ENCODE measurements at regions of chr15 and their contacts with region 1.

Region 1: GRCh38 chr15:73081321-73081958 is 29.2 kb downstream of the NEO1 start:
- DNase-seq: peak in 5 of 14 experiments; percentile 0 to 71 (median 49)
- ATAC-seq: peak; percentile 54
- H3K4me3 ChIP-seq: no peak overlapping the region
- H3K4me3 Mint-ChIP-seq: no peak overlapping the region
- H3K27ac ChIP-seq: no peak overlapping the region
- H3K27ac Mint-ChIP-seq: no peak overlapping the region
- H3K4me1 ChIP-seq: no peaks in the 10 kb centered on the region
- H3K4me1 Mint-ChIP-seq: no peaks in the 10 kb centered on the region
- H3K27me3 ChIP-seq: no peaks in the 10 kb centered on the region
- H3K27me3 Mint-ChIP-seq: peaks cover 4% of the 10 kb centered on the region
- CTCF ChIP-seq: peak; percentile 68

Region 2: GRCh38 chr15:72339777-72340177 is 741.7 kb before region 1 on chr15:
- CTCF ChIA-PET with region 1: no interaction called
- POLR2A ChIA-PET with region 1: no interaction called
- intact Hi-C with region 1: loop called in 1 of 2 experiments (anchors 10 kb)
- DNase-seq: peak in 1 of 14 experiments; percentile 22
- ATAC-seq: no peak
- H3K4me3 ChIP-seq: no peak overlapping the region
- H3K4me3 Mint-ChIP-seq: no peak overlapping the region
- H3K27ac ChIP-seq: no peak overlapping the region
- H3K27ac Mint-ChIP-seq: no peak overlapping the region
- H3K4me1 ChIP-seq: no peaks in the 10 kb centered on the region
- H3K4me1 Mint-ChIP-seq: no peaks in the 10 kb centered on the region
- H3K27me3 ChIP-seq: no peaks in the 10 kb centered on the region
- H3K27me3 Mint-ChIP-seq: no peaks in the 10 kb centered on the region
- CTCF ChIP-seq: no peak

Region 3: DNA sequence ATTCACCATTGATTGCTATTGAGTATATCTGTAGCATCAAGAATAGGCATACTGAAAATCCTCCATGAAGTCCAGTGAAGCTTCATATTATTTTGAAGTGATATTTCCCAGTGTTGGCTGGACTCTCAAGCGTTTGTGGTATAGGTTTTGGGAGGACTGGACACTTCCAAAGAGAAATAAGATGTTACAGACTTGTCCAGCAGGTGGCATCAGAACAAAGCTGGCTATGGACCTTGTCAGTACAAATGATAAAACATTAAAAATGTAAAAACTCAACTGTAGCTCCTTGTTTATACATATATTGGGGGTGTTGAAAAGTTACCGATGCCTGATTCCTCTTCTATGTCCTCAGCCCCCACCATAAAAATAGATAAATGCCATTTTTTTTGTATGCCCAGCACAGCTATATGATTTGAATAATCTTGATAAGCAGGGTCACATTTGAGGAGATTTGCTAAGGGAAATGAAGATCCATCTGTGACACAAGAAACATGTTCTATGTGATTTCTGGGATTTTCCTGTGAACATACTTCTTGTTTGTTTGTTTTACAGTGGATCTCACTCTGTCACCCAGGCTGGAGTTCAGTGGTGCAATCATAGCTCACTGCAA is 481.5 kb before region 1 on chr15:
- CTCF ChIA-PET with region 1: no interaction called
- POLR2A ChIA-PET with region 1: no interaction called
- intact Hi-C with region 1: loop called in 1 of 2 experiments (anchors 5 kb)
- DNase-seq: peak in 4 of 14 experiments; percentile 35 to 58 (median 48)
- ATAC-seq: no peak
- H3K4me3 ChIP-seq: no peak overlapping the region
- H3K4me3 Mint-ChIP-seq: no peak overlapping the region
- H3K27ac ChIP-seq: no peak overlapping the region
- H3K27ac Mint-ChIP-seq: no peak overlapping the region
- H3K4me1 ChIP-seq: no peaks in the 10 kb centered on the region
- H3K4me1 Mint-ChIP-seq: no peaks in the 10 kb centered on the region
- H3K27me3 ChIP-seq: no peaks in the 10 kb centered on the region
- H3K27me3 Mint-ChIP-seq: no peaks in the 10 kb centered on the region
- CTCF ChIP-seq: peak; percentile 79

Region 4: DNA sequence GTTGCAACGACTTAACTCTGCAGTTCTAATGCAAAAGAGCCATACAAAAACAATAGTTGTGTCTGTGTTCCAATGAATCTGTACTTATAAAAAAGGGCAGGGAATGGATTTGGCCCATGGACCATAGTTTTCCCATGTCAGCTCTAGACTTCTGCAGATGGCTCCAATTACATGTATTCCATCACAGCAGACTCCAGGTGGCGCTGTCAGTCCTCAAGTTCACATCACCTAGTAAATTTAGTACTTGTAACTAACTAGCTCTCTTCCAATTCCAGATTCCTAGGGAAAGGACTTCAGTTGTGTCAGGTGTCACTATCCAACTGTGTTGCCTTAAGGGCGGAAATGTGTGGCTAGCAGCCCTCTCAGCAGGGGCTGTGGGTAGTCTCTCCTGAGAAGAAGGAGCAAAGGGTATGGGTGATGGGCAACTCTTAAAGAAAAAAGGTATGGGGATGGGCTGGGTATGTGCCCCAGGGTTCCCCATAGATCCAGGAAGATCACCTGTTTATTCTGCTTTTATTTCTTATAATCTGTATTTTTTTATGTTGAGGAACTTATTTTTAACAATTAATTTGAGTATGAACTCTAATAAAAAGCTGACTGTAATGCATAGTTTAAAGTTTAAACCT is 359.3 kb before region 1 on chr15:
- CTCF ChIA-PET with region 1: interaction called, 14 read pairs
- POLR2A ChIA-PET with region 1: interaction called, 3 read pairs
- intact Hi-C with region 1: loop called in 1 of 2 experiments (anchors 2 kb)
- DNase-seq: peak; percentile 51 to 81 (median 65)
- ATAC-seq: peak; percentile 51
- H3K4me3 ChIP-seq: no peak overlapping the region
- H3K4me3 Mint-ChIP-seq: no peak overlapping the region
- H3K27ac ChIP-seq: no peak overlapping the region
- H3K27ac Mint-ChIP-seq: no peak overlapping the region
- H3K4me1 ChIP-seq: no peaks in the 10 kb centered on the region
- H3K4me1 Mint-ChIP-seq: no peaks in the 10 kb centered on the region
- H3K27me3 ChIP-seq: no peaks in the 10 kb centered on the region
- H3K27me3 Mint-ChIP-seq: no peaks in the 10 kb centered on the region
- CTCF ChIP-seq: peak; percentile 92

Region 5: DNA sequence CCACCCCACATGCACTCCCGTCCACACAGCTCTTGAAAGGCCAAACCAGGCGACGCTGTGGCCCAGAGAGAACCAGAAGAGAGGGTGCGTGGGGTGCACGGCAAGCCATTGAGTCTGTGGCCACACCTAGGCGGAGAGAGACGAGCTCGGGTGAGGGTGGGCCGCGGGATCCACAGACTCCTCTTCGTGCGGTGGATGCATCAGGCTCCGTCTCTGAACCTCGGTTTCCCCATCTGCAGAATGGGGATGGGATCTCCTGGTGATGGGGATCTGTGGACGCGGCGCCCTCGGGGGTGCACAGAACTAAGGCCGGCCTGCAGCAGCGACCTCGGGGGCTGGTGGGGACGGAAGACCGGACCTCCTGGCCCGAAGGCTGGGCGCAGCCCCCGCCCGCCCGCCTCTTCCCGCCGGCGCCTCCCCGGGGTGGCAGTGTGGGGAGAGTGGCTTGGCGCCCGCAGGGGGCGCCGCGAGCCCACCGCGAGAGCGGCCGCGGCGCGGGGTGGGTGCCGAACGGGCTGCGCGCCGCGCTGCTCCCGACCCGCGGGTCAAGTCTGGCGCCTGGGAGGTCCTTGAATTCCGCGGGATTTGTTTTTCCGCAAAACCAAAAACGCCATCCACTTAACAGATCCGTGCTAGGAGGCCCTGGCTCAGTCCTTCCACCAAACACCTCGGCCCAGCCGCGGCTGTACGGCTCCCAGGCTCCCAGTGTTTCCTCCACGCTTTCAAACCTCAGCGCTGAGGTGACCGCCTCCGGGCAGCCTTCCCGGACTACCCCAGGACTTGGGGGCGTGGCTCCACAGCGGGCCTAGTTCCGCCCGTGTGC is 284.7 kb before region 1 on chr15:
- CTCF ChIA-PET with region 1: no interaction called
- POLR2A ChIA-PET with region 1: no interaction called
- intact Hi-C with region 1: loop called (anchors 1 to 2 kb)
- DNase-seq: peak in 12 of 14 experiments; percentile 17 to 74 (median 38)
- ATAC-seq: peak; percentile 81
- H3K4me3 ChIP-seq: peak overlapping the region; percentile 66
- H3K4me3 Mint-ChIP-seq: peak overlapping the region; percentile 89
- H3K27ac ChIP-seq: no peak overlapping the region
- H3K27ac Mint-ChIP-seq: no peak overlapping the region
- H3K4me1 ChIP-seq: peaks cover 11% of the 10 kb centered on the region
- H3K4me1 Mint-ChIP-seq: peaks cover 10% of the 10 kb centered on the region
- H3K27me3 ChIP-seq: peaks cover 6 to 8% of the 10 kb centered on the region in 2 experiments
- H3K27me3 Mint-ChIP-seq: peaks cover 49% of the 10 kb centered on the region
- CTCF ChIP-seq: peak; percentile 27

Region 6: GRCh38 chr15:73051811-73052678 is 29.4 kb before region 1 on chr15 and contains the start of gene NEO1:
- CTCF ChIA-PET with region 1: interaction called, 3 read pairs
- POLR2A ChIA-PET with region 1: interaction called, 4 read pairs
- intact Hi-C with region 1: loop called (anchors 1 to 2 kb)
- DNase-seq: peak; percentile 71 to 93 (median 80)
- ATAC-seq: peak; percentile 81
- H3K4me3 ChIP-seq: peak within 1 kb of the TSS; percentile 85
- H3K4me3 Mint-ChIP-seq: peak within 1 kb of the TSS; percentile 91
- H3K27ac ChIP-seq: peak within 1 kb of the TSS in 1 of 2 donors; percentile 50
- H3K27ac Mint-ChIP-seq: peak within 1 kb of the TSS; percentile 85
- H3K4me1 ChIP-seq: peaks cover 11% of the 10 kb centered on the region
- H3K4me1 Mint-ChIP-seq: peaks cover 14% of the 10 kb centered on the region
- H3K27me3 ChIP-seq: peaks cover 0 to 7% of the 10 kb centered on the region in 2 experiments
- H3K27me3 Mint-ChIP-seq: peaks cover 11% of the 10 kb centered on the region
- CTCF ChIP-seq: no peak
- total RNA-seq, gene NEO1: 6.0 to 8.0 TPM

Measured in CD4-positive, alpha-beta T cell (primary cell).